A549 (cell line): ENCODE measurements at regions of chr6 and their contacts with region 1.

Region 1: DNA sequence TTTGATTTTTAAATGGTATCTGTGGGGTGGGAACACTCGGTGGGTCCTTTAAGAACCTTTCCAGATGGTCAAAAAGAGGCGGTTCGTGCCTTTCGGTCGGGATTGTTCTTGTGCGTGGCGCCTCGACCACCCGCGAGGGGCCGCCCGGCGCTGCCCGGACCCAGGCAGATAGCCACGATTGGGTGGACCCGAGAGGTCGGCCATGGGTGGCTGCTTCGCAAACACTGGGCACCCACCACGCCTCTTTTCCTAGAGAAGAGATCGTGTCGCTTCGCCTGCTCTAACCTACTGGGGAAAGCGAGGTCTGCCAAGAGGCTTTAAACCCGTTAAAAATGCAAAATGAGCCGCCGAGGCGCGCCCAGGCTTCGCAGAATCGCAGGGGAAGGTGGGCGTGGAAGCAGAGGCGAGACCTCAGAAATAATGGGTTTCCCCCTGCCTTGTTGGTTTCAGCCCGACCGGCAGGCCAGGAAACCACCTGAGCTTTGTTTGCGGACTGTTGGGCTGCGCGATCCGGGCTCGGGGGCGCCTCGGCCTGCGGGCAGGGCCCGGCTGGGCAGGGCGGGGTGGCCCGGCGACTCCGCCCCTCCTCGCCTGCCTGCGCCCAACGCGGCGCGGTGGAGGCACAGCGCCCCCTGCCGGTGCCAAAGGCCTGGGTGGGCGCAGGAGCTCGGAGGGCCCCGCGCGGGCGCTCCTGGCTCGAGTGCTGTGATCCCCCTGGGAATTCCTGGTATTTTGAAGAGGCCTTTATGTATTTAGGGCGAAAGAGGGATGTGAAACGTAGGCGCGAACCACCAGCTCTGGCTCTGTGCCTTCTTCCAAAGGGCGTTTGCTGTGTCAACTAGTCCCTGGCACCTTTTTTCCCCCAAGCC is 1.6 kb downstream of the MARCKS start:
- DNase-seq: peak; percentile 76 to 84
- ATAC-seq: peak; percentile 73 to 86
- H3K4me3 ChIP-seq: peak overlapping the region; percentile 98
- H3K27ac ChIP-seq: peak overlapping the region; percentile 95 to 99
- H3K4me1 ChIP-seq: peaks cover 16% of the 10 kb centered on the region; the same call in 2 of the 3 replicates
- CTCF ChIP-seq: peak; percentile 85
- EP300 ChIP-seq: no peak
- POLR2A ChIP-seq: peak; percentile 33
- RAD21 ChIP-seq: peak; percentile 72 to 96

Region 2: GRCh38 chr6:113120582-113121285 is 738.0 kb before region 1 on chr6:
- CTCF ChIA-PET with region 1: interaction called, 7 read pairs
- POLR2A ChIA-PET with region 1: interaction called, 14 read pairs
- DNase-seq: peak in 1 of 2 experiments; percentile 52
- ATAC-seq: peak; percentile 60 to 71; a peak in 4 of 6 replicates
- H3K4me3 ChIP-seq: no peak overlapping the region
- H3K27ac ChIP-seq: peak overlapping the region; percentile 69 to 87
- H3K4me1 ChIP-seq: peaks cover 36% of the 10 kb centered on the region
- CTCF ChIP-seq: no peak
- EP300 ChIP-seq: 0 out of 5 replicates have a peak, but pooled peaks of 1 of the 2 experiments have one; percentile 6
- POLR2A ChIP-seq: no peak
- RAD21 ChIP-seq: 0 out of 5 replicates have a peak, but pooled peaks of 1 of the 2 experiments have one; percentile 2

Region 3: DNA sequence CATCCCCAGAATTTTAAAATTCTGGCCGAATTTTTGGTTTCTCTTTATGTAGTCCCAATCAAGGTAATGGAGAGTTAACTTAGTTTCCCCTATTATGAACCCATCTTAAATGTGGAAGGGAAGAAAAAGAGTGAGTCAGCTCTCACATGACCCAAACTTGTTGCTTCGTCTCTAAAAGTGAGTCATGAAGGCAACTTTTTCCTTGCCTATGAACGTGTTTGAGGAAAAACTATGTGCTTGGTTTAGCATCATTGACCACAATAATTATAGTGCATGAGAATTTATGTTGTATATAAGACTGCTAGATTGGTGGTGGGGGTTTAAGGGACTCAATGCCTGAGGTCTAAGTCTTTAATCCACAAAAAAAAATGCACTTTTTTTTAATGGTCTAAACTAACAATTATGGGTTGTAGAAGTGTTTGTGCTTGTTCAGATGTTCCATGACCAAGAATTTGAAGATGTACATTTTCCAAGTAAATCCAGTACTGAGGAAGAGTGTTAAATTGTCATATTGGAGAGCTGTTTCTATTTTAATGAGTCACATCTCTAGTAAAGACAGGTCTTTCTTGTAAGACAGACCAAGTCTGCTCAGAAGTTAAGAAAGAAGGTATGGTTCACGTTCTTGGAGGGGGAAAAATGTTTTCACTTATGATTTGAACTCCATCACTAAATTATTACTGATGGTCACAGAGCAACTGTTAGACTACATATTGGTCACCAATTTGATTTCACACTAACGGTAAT is 411.5 kb before region 1 on chr6:
- CTCF ChIA-PET with region 1: interaction called, 11 read pairs
- POLR2A ChIA-PET with region 1: no interaction called
- DNase-seq: peak in 1 of 2 experiments; percentile 29
- ATAC-seq: 0 out of 6 replicates have a peak, but pooled peaks of 1 of the 2 experiments have one; percentile 39
- H3K4me3 ChIP-seq: no peak overlapping the region
- H3K27ac ChIP-seq: peak overlapping the region; percentile 45 to 55; a peak in 4 of 6 replicates
- H3K4me1 ChIP-seq: peaks cover 31% of the 10 kb centered on the region
- CTCF ChIP-seq: no peak
- EP300 ChIP-seq: no peak
- POLR2A ChIP-seq: no peak
- RAD21 ChIP-seq: no peak

Region 4: GRCh38 chr6:113686049-113686448 is 172.7 kb before region 1 on chr6:
- CTCF ChIA-PET with region 1: interaction called, 16 read pairs
- POLR2A ChIA-PET with region 1: interaction called, 6 read pairs
- DNase-seq: no peak
- ATAC-seq: no peak
- H3K4me3 ChIP-seq: no peak overlapping the region
- H3K27ac ChIP-seq: no peak overlapping the region
- H3K4me1 ChIP-seq: peaks cover 16% of the 10 kb centered on the region
- CTCF ChIP-seq: no peak
- EP300 ChIP-seq: no peak
- POLR2A ChIP-seq: no peak
- RAD21 ChIP-seq: no peak

Region 5: GRCh38 chr6:113879186-113880096 is 20.7 kb after region 1 on chr6:
- CTCF ChIA-PET with region 1: interaction called, 10 read pairs
- POLR2A ChIA-PET with region 1: no interaction called
- DNase-seq: peak; percentile 48 to 73
- ATAC-seq: peak; percentile 99
- H3K4me3 ChIP-seq: no peak overlapping the region
- H3K27ac ChIP-seq: peak overlapping the region; percentile 39 to 48; a peak in 3 of 6 replicates
- H3K4me1 ChIP-seq: peaks cover 30% of the 10 kb centered on the region; the same call in 2 of the 3 replicates
- CTCF ChIP-seq: peak; percentile 69
- EP300 ChIP-seq: no peak
- POLR2A ChIP-seq: no peak
- RAD21 ChIP-seq: peak; percentile 84

Region 6: DNA sequence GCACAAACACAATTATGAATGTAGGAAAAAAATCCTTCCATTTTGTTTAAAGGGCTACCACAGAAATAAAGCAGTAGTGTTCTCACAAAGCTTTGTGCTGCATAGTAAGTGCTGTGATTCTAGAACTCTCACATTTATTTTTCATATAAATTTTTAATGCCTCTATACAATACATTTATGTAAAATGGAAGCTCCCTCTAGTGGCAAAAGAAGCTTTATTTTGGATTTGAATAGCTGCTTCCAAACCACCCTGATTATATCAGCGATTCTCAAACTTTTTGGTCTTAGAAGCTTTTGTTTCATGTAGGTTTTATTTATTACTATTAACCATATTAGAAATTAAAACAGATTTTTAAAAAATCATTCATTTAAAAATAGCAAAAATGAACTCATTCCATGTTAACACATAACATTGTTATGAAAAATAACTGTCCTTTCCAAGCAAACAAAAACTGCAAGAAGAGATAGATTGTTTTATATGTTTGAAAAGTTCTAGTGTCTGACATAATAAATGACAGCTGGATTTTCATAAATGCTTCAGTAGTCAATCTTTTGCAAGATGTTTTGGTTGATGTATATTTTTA is 445.7 kb after region 1 on chr6:
- CTCF ChIA-PET with region 1: no interaction called
- POLR2A ChIA-PET with region 1: no interaction called
- DNase-seq: peak in 1 of 2 experiments; percentile 9
- ATAC-seq: no peak
- H3K4me3 ChIP-seq: no peak overlapping the region
- H3K27ac ChIP-seq: no peak overlapping the region
- H3K4me1 ChIP-seq: no peaks in the 10 kb centered on the region
- CTCF ChIP-seq: peak; percentile 49
- EP300 ChIP-seq: no peak
- POLR2A ChIP-seq: no peak
- RAD21 ChIP-seq: peak; percentile 10 to 34; a peak in 2 of 5 replicates